ENCODE measurements at regions of chr4 and their contacts with region 1.

Region 1: DNA sequence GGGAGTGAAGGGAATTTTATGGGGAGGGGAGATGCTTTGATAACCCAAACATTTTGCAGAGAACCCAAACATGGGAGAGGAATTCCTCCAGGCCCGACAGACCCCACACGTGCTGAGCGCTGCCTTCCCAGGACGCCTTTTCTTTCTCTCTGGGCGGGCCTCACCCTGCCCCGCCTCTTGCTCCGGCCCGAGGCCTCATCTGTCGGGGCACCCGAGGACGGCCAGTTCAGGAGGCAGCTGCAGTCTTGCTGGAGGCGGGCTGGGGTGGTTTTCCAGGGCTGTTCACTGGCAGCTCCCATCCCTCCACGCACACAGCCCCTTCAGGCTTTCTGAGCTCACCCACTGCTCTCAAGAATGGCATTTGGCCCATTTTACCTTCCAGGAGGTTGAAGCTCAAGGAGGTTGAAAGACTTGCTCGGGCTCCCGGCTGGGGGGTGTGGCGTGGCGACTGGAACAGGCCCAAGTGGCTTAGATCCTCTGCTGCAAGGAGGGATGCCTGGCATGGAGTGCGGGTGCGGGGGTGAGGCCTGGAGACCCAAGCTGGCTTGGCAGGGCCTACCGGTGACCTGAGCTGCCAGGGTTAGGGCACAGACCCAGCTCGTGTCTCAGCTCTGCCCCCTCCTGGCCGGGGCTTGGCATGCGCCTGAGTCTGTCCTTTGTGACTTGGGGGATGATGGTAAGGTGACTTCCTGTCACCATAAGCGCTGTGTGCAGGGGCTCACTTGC is 99.2 kb downstream of the PSAPL1 start:
- DNase-seq: peak; percentile 58 to 69
- ATAC-seq: peak; percentile 72 to 89; a peak in 4 of 6 replicates
- H3K4me3 ChIP-seq: no peak overlapping the region
- H3K27ac ChIP-seq: peak overlapping the region in 1 of 2 experiments; percentile 54; a peak in 3 of 6 replicates
- H3K4me1 ChIP-seq: peaks cover 21% of the 10 kb centered on the region
- CTCF ChIP-seq: peak; percentile 48
- EP300 ChIP-seq: no peak
- POLR2A ChIP-seq: no peak
- RAD21 ChIP-seq: peak; percentile 64 to 65

Region 2: GRCh38 chr4:7201420-7202305 is 133.8 kb before region 1 on chr4:
- CTCF ChIA-PET with region 1: interaction called, 10 read pairs
- POLR2A ChIA-PET with region 1: no interaction called
- DNase-seq: no peak
- ATAC-seq: no peak
- H3K4me3 ChIP-seq: no peak overlapping the region
- H3K27ac ChIP-seq: peak overlapping the region in 1 of 2 experiments; percentile 43; a peak in 2 of 6 replicates
- H3K4me1 ChIP-seq: peaks cover 18% of the 10 kb centered on the region
- CTCF ChIP-seq: no peak
- EP300 ChIP-seq: no peak
- POLR2A ChIP-seq: no peak
- RAD21 ChIP-seq: no peak

Region 3: GRCh38 chr4:7303561-7303960 is 31.9 kb before region 1 on chr4:
- CTCF ChIA-PET with region 1: no interaction called
- POLR2A ChIA-PET with region 1: no interaction called
- DNase-seq: no peak
- ATAC-seq: no peak
- H3K4me3 ChIP-seq: no peak overlapping the region
- H3K27ac ChIP-seq: no peak overlapping the region
- H3K4me1 ChIP-seq: no peaks in the 10 kb centered on the region
- CTCF ChIP-seq: no peak
- EP300 ChIP-seq: no peak
- POLR2A ChIP-seq: no peak
- RAD21 ChIP-seq: no peak

Region 4: GRCh38 chr4:7323872-7324650 is 11.4 kb before region 1 on chr4:
- CTCF ChIA-PET with region 1: interaction called, 18 read pairs
- POLR2A ChIA-PET with region 1: no interaction called
- DNase-seq: peak; percentile 18 to 77
- ATAC-seq: peak; percentile 48 to 81
- H3K4me3 ChIP-seq: no peak overlapping the region
- H3K27ac ChIP-seq: no peak overlapping the region
- H3K4me1 ChIP-seq: peaks cover 9% of the 10 kb centered on the region
- CTCF ChIP-seq: no peak
- EP300 ChIP-seq: no peak
- POLR2A ChIP-seq: no peak
- RAD21 ChIP-seq: peak in 1 of 2 experiments; percentile 31; a peak in 2 of 5 replicates

Region 5: DNA sequence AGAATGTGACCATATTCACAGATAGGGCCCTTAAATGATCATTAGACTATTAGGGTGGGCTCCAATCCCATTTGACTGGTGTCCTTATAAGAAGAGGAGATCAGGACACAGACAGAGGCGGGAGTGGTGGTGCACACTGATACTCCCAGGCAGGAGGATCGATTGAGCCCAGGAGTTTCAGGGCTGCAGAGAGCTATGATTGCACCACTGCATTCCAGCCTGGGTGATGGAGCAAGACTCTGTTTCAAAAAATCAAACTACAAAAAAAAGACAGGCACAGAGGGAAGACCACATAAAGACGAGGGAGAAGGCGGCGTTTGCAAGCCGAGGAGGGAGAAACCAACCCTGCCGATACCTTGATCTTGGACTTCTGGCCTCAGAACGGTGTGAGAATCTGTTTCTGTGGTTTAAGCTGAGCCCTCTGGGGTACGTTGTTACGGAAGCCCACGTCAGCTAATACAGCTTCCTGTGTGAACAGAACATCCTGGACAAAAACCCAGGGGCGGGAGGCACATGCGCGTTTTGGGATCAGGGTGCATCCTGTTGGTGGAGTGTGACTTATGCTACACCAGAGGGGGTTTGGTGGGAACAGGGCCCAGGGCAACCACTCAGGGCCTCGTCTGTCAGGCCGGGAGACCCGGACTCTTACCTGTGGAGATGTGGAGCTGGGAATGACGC is 311.0 kb after region 1 on chr4:
- CTCF ChIA-PET with region 1: no interaction called
- POLR2A ChIA-PET with region 1: no interaction called
- DNase-seq: no peak
- ATAC-seq: no peak
- H3K4me3 ChIP-seq: no peak overlapping the region
- H3K27ac ChIP-seq: no peak overlapping the region
- H3K4me1 ChIP-seq: peaks cover 13% of the 10 kb centered on the region; the same call in 2 of the 3 replicates
- CTCF ChIP-seq: no peak
- EP300 ChIP-seq: no peak
- POLR2A ChIP-seq: no peak
- RAD21 ChIP-seq: no peak

Measured in A549 (cell line).